Right ventricle myocardium superior (tissue), 1 donor: ENCODE measurements at regions of chr16 and their contacts with region 1.

Region 1: DNA sequence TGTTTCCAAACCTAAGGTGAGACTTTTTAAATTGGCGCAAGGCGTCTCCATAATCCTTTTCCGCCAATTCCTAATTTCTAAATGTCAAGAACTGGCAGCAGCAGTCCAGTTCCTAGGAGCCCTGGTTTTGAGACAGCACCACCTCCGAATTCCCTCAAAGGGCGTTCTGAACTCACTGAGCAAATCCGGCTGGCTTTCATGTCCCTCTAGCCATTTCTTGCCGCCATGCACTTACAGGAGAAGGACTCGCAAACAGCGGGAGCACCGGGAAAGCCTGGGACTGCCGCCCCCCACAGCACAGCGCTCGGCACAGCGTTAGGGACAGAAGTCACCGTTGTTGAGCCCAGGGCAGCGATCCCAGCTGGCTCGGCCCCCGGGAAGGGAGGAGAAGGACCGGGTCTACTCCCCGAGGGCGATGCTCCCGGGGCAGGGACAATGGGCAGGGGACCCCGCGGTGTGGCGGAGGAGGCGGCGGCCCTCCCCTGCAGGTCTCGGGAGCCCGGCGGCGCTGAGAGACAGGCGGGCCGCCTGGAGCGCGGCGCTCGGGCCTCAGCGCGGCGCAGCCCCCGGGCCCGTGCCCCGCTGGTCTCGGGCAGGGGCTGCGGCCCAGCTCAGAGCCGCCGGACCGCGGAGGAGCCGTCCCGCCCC is 545 bp downstream of the ARHGAP17 start:
- DNase-seq: peak; percentile 63
- ATAC-seq: peak; percentile 35

Region 2: GRCh38 chr16:24853830-24854229 is 160.8 kb before region 1 on chr16:
- intact Hi-C with region 1: no loop called
- DNase-seq: no peak
- ATAC-seq: peak; percentile 41

Region 3: GRCh38 chr16:24975428-24975889 is 39.2 kb before region 1 on chr16:
- intact Hi-C with region 1: loop called (anchors 5 kb)
- DNase-seq: no peak
- ATAC-seq: no peak